ENCODE measurements at regions of chr11 and their contacts with region 1.

Region 1: GRCh38 chr11:66126808-66127555 is 56.9 kb downstream of the PACS1 start:
- DNase-seq: peak; percentile 74
- ATAC-seq: peak; percentile 94

Region 2: GRCh38 chr11:66069715-66070603 is 57.0 kb before region 1 on chr11 and contains the start of gene PACS1:
- intact Hi-C with region 1: loop called (anchors 5 kb)
- DNase-seq: peak; percentile 90
- ATAC-seq: peak; percentile 85
- total RNA-seq, gene PACS1: 46.5 TPM

Region 3: DNA sequence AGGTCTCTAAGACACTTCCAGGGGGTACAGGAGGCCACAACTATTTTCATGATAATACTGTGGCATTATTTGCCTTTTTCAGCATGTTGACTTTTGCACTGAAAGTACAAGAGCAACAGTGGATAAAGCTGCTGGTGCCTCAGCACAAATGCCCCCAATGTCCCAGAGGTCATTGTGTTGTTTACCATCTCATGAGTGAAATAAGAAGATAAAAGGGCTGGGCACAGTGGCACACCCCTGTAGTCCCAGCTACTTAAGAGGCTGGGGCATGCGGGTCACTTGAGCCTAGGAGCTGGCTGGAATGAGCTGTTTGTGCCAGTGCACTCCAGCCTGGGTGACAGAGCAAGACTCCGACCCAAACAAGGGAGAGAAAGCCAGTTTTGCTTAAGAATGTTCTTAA is 68.9 kb after region 1 on chr11:
- intact Hi-C with region 1: no loop called
- DNase-seq: no peak
- ATAC-seq: no peak

Region 4: GRCh38 chr11:66228521-66228920 is 101.5 kb after region 1 on chr11:
- intact Hi-C with region 1: no loop called
- DNase-seq: no peak
- ATAC-seq: no peak

Region 5: GRCh38 chr11:66311965-66312548 is 185.1 kb after region 1 on chr11:
- intact Hi-C with region 1: no loop called
- DNase-seq: peak; percentile 96
- ATAC-seq: peak; percentile 84

Region 6: DNA sequence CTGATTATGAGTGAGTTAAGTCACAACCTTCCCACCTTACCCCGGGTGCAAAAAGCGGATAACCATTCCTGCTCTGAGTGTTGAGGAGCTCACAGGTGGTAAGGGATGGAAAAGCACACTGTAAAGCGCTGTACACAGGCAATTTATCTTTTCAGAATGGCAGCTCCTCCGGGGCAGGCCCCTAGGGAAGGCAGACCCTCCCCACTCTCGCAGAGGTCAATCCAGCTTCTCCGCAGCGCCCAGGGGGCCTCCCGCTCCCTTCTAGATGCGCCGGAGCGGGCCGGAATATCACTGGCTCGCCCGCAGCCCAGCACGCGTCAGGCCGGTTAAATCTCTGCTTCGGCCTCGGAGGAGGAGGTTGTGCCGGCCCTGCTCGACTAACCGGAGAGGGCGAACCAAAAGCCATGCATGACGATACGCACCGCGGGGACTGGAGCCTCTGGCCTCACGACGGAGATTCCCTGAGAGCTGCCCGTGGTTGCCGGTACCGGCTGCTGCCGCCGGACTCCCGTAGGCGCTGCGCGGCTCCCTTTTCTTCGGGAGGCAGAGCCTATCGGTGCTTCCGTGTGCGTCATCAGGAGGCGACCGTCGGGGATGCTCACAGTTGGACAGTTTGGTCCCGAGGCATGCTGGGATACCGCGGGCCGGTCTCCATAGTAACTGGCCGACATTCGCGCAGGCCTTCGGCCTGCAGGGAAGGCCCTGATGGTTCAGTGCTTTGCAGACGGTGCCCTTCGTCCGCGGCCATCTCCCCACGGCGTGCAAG is 217.8 kb after region 1 on chr11 and contains the start of gene BRMS1:
- intact Hi-C with region 1: no loop called
- DNase-seq: peak; percentile 100
- ATAC-seq: peak; percentile 90
- total RNA-seq, gene BRMS1: 15.1 TPM